GM12878 (cell line): ENCODE measurements at regions of chr14 and their contacts with region 1.

Region 1: GRCh38 chr14:59632381-59632780 is 55.8 kb upstream of the CCDC175 start:
- DNase-seq: no peak
- ATAC-seq: peak; percentile 81
- H3K4me3 ChIP-seq: no peak overlapping the region
- H3K27ac ChIP-seq: no peak overlapping the region
- H3K4me1 ChIP-seq: no peaks in the 10 kb centered on the region
- H3K27me3 ChIP-seq: peaks cover 3 to 4% of the 10 kb centered on the region in 2 experiments; a peak in 3 of 4 replicates
- CTCF ChIP-seq: peak; percentile 52 to 61 (median 56); a peak in 5 of 6 replicates
- EP300 ChIP-seq: no peak
- POLR2A ChIP-seq: no peak
- RAD21 ChIP-seq: peak; percentile 64

Region 2: GRCh38 chr14:59688224-59689170 is 56.1 kb after region 1 on chr14:
- CTCF ChIA-PET with region 1: interaction called, 26 read pairs
- POLR2A ChIA-PET with region 1: no interaction called
- RAD21 ChIA-PET with region 1: interaction called, 13 read pairs
- SMC1A ChIA-PET with region 1: interaction called, 17 read pairs
- in situ Hi-C with region 1: no loop called
- intact Hi-C with region 1: loop called (anchors 1 kb)
- DNase-seq: no peak
- ATAC-seq: peak; percentile 99
- H3K4me3 ChIP-seq: no peak overlapping the region
- H3K27ac ChIP-seq: no peak overlapping the region
- H3K4me1 ChIP-seq: no peaks in the 10 kb centered on the region
- H3K27me3 ChIP-seq: no peaks in the 10 kb centered on the region
- CTCF ChIP-seq: peak; percentile 64 to 84 (median 81)
- EP300 ChIP-seq: no peak
- POLR2A ChIP-seq: no peak
- RAD21 ChIP-seq: peak; percentile 60

Region 3: DNA sequence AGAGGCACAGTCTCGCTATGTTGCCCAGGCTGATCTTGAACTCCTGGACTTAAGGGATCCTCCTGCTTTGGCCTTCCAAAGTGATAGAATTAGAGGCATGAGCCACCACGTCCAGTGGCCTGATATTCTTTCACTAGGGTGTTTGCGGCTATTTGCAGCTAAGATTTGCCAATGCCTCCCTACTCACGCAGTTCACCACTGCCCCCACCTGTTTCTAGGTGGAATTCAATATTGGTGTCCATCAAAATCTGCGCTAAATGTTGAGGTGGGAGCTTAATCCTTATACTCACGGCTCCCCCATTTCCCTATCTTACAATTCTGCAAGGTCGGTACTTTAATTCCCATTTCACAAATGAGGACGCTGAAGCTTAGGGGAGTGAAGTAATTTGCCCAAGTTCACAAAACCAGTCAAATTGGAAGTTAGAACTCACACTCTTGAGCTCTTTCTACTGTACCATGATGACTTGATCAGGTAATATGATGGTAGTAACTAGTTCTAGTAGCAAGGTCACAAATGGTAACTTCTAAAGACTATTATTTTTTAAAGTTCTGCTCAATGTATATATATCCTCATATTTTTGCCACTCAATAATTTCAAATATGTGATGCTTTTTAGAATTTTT is 265.5 kb after region 1 on chr14:
- CTCF ChIA-PET with region 1: interaction called, 18 read pairs
- POLR2A ChIA-PET with region 1: no interaction called
- RAD21 ChIA-PET with region 1: interaction called, 11 read pairs
- SMC1A ChIA-PET with region 1: interaction called, 14 read pairs
- in situ Hi-C with region 1: no loop called
- intact Hi-C with region 1: loop called (anchors 2 kb)
- DNase-seq: no peak
- ATAC-seq: peak; percentile 68
- H3K4me3 ChIP-seq: no peak overlapping the region
- H3K27ac ChIP-seq: no peak overlapping the region
- H3K4me1 ChIP-seq: no peaks in the 10 kb centered on the region
- H3K27me3 ChIP-seq: no peaks in the 10 kb centered on the region; a peak in 1 of 4 replicates
- CTCF ChIP-seq: peak; percentile 34 to 36 (median 34); a peak in 4 of 6 replicates
- EP300 ChIP-seq: no peak
- POLR2A ChIP-seq: no peak
- RAD21 ChIP-seq: peak; percentile 68

Region 4: DNA sequence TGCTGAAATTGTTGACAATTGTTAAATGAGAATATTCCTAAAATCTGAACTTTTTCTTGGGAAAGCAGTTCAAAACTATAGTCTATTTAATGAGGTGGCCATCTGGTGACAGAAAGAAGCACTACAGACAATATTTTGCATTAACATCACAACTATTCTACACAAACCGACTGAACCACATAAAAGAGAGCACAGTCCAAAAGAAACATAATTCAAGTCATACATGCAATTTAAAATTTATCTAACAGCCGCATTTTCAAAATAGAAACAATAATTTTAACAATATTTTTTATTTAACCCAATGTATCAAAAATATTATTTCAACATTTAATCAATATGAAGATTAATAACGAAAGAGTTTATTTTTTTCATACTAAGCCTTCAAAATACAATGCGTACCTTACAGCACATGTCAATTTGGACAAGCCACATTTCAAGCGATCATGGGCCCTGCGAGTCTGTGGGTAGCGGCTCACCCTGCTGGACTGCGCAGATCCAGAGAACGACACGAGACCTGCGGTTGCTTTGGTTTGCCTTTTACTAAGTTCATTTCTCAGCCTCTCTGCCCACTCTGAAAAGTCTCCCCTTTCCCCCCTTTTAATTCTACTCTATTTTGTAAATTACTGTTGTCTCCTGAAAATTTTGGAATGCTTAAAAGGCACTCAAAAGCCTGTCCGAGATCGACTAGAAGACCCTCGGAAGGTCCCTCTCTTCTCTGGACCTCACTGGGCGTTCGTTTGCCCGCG is 286.6 kb after region 1 on chr14:
- CTCF ChIA-PET with region 1: interaction called, 18 read pairs
- POLR2A ChIA-PET with region 1: no interaction called
- RAD21 ChIA-PET with region 1: no interaction called
- SMC1A ChIA-PET with region 1: interaction called, 12 read pairs
- in situ Hi-C with region 1: no loop called
- intact Hi-C with region 1: loop called (anchors 2 kb)
- DNase-seq: no peak
- ATAC-seq: peak; percentile 83
- H3K4me3 ChIP-seq: peak overlapping the region; percentile 45; the same call in 1 of the 2 replicates
- H3K27ac ChIP-seq: no peak overlapping the region
- H3K4me1 ChIP-seq: peaks cover 3% of the 10 kb centered on the region; the same call in 1 of the 2 replicates
- H3K27me3 ChIP-seq: peaks cover 0 to 5% of the 10 kb centered on the region in 2 experiments; a peak in 2 of 4 replicates
- CTCF ChIP-seq: peak; percentile 21 to 45 (median 38); a peak in 5 of 6 replicates
- EP300 ChIP-seq: no peak
- POLR2A ChIP-seq: no peak
- RAD21 ChIP-seq: peak; percentile 26; the same call in 1 of the 2 replicates

Region 5: GRCh38 chr14:60051721-60052221 is 419.4 kb after region 1 on chr14:
- CTCF ChIA-PET with region 1: no interaction called
- POLR2A ChIA-PET with region 1: no interaction called
- RAD21 ChIA-PET with region 1: no interaction called
- SMC1A ChIA-PET with region 1: no interaction called
- in situ Hi-C with region 1: no loop called
- intact Hi-C with region 1: loop called (anchors 10 kb)
- DNase-seq: no peak
- ATAC-seq: peak; percentile 42; the same call in 2 of the 3 replicates
- H3K4me3 ChIP-seq: no peak overlapping the region
- H3K27ac ChIP-seq: no peak overlapping the region
- H3K4me1 ChIP-seq: peaks cover 5% of the 10 kb centered on the region; the same call in 1 of the 2 replicates
- H3K27me3 ChIP-seq: 0 out of 4 replicates have a peak, but pooled peaks cover 0 to 2% of the 10 kb centered on the region in 2 experiments
- CTCF ChIP-seq: no peak
- EP300 ChIP-seq: no peak
- POLR2A ChIP-seq: no peak
- RAD21 ChIP-seq: no peak

Region 6: DNA sequence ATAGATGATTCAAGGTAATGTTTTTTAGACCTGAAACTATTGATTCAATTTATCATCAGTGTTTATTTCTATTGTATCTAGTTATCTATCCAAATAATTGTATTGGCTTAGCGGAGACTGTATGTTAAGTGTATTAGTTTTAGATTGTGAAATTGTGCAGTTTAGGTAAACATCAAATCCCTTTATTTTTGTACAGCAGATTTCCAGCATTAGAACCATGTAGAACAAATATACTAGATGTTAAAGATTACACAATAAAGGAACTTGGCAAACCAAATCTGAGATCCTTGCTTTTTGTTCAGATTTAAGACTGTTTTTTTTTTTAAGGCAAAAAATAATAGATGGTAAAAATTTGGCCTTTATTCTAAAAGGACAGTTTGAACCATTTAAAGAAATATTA is 655.9 kb after region 1 on chr14:
- CTCF ChIA-PET with region 1: no interaction called
- POLR2A ChIA-PET with region 1: no interaction called
- RAD21 ChIA-PET with region 1: no interaction called
- SMC1A ChIA-PET with region 1: no interaction called
- in situ Hi-C with region 1: no loop called
- intact Hi-C with region 1: no loop called
- DNase-seq: no peak
- ATAC-seq: no peak
- H3K4me3 ChIP-seq: no peak overlapping the region
- H3K27ac ChIP-seq: no peak overlapping the region
- H3K4me1 ChIP-seq: no peaks in the 10 kb centered on the region
- H3K27me3 ChIP-seq: no peaks in the 10 kb centered on the region
- CTCF ChIP-seq: no peak
- EP300 ChIP-seq: no peak
- POLR2A ChIP-seq: no peak
- RAD21 ChIP-seq: no peak